ENCODE measurements at regions of chr4 and their contacts with region 1.

Region 1: GRCh38 chr4:6673660-6674499 is 19.8 kb upstream of the S100P start:
- DNase-seq: peak; percentile 96
- H3K4me3 Mint-ChIP-seq: peak overlapping the region; percentile 96
- H3K27ac Mint-ChIP-seq: peak overlapping the region; percentile 98
- H3K4me1 Mint-ChIP-seq: peaks cover 45% of the 10 kb centered on the region
- H3K27me3 Mint-ChIP-seq: no peaks in the 10 kb centered on the region

Region 2: GRCh38 chr4:6595897-6596537 is 77.9 kb before region 1 on chr4:
- CTCF ChIA-PET with region 1: no interaction called
- intact Hi-C with region 1: no loop called
- DNase-seq: no peak
- H3K4me3 Mint-ChIP-seq: no peak overlapping the region
- H3K27ac Mint-ChIP-seq: no peak overlapping the region
- H3K4me1 Mint-ChIP-seq: no peaks in the 10 kb centered on the region
- H3K27me3 Mint-ChIP-seq: no peaks in the 10 kb centered on the region

Region 3: DNA sequence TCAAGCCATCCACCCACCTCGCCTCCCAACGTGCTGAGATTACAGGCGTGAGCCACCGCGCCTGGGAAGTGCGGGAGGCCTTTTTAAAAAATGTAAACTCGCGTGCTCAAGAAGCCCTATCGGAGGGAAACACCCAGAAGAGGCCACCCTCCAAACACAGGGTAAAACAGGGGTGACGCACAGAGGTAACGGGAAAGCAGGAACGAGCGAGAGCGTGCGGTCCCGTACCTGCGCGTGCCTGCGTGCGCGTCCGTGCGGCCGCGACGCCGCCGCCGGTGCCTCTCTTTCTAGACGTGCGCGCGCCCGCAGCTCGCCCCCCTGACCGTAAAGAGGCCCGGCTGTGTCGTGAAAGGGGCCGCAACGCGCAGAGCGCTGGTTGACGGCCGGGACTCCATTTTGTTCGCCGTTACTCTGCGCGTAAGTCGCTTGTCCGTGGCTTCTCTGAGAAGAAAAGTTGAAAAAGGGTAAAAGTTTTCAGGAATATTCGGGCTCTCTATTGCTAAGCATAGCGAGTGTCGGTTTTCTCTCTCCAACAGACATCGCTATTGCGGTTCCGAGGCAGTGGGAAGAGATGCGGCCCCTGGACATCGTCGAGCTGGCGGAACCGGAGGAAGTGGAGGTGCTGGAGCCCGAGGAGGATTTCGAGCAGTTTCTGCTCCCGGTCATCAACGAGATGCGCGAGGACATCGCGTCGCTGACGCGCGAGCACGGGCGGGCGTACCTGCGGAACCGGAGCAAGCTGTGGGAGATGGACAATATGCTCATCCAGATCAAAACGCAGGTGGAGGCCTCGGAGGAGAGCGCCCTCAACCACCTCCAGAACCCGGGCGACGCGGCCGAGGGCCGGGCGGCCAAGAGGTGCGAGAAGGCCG is 33.4 kb before region 1 on chr4 and contains the start of gene MRFAP1:
- CTCF ChIA-PET with region 1: interaction called, 5 read pairs
- intact Hi-C with region 1: loop called (anchors 1 kb)
- DNase-seq: peak; percentile 96
- H3K4me3 Mint-ChIP-seq: peak within 1 kb of the TSS; percentile 98
- H3K27ac Mint-ChIP-seq: peak within 1 kb of the TSS; percentile 99
- H3K4me1 Mint-ChIP-seq: peaks cover 28% of the 10 kb centered on the region
- H3K27me3 Mint-ChIP-seq: no peaks in the 10 kb centered on the region
- total RNA-seq, gene MRFAP1: 150 to 151 TPM

Region 4: GRCh38 chr4:6688879-6689505 is 15.1 kb after region 1 on chr4:
- CTCF ChIA-PET with region 1: interaction called, 33 read pairs
- intact Hi-C with region 1: loop called (anchors 1 kb)
- DNase-seq: peak; percentile 89
- H3K4me3 Mint-ChIP-seq: peak overlapping the region; percentile 51
- H3K27ac Mint-ChIP-seq: no peak overlapping the region
- H3K4me1 Mint-ChIP-seq: peaks cover 61% of the 10 kb centered on the region
- H3K27me3 Mint-ChIP-seq: no peaks in the 10 kb centered on the region

Region 5: DNA sequence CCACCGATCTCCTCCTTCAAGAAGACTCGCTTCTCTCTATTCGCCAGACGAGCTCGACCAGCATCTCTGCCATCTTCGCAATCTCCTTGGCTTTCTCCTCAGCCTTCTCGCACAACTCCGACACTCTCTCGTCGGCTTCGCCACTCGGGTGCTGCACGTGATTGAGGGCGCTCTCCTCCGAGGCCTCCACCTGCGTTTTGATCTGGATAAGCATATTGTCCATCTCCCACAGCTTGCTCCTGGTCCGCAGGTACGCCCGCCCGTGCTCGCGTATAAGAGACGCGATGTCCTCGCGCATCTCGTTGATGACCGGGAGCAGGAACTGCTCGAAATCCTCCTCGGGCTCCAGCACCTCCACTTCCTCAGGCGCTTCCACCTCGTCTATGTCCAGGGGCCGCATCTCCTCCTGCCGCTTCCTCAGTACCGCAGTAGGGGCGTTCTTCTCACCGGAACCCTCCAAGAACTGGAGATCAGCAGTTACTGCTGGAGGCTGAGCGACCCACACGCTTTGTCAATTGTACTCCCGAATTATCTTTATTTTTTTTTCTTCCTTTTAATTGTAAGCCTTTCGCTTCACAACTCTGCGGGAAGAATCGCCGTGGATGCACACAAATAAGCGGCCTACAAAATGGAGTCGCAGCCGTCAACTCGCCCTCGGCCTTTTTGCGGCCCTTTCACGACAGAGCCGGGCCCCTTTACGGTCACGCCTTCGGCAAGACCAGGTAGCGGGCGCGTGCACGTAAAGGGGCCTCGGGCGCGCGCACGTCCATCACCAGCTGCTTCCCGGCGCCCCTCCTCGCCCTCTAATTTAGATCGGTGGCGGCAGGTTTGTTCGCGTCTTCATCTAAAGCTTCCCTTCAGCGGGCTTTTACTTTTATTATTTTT is 35.6 kb after region 1 on chr4 and contains the start of gene MRFAP1L1:
- CTCF ChIA-PET with region 1: interaction called, 96 read pairs
- intact Hi-C with region 1: loop called (anchors 1 kb)
- DNase-seq: peak; percentile 98
- H3K4me3 Mint-ChIP-seq: peak within 1 kb of the TSS; percentile 98
- H3K27ac Mint-ChIP-seq: peak within 1 kb of the TSS; percentile 98
- H3K4me1 Mint-ChIP-seq: peaks cover 49% of the 10 kb centered on the region
- H3K27me3 Mint-ChIP-seq: no peaks in the 10 kb centered on the region
- total RNA-seq, gene MRFAP1L1: 37.0 to 38.6 TPM

Region 6: DNA sequence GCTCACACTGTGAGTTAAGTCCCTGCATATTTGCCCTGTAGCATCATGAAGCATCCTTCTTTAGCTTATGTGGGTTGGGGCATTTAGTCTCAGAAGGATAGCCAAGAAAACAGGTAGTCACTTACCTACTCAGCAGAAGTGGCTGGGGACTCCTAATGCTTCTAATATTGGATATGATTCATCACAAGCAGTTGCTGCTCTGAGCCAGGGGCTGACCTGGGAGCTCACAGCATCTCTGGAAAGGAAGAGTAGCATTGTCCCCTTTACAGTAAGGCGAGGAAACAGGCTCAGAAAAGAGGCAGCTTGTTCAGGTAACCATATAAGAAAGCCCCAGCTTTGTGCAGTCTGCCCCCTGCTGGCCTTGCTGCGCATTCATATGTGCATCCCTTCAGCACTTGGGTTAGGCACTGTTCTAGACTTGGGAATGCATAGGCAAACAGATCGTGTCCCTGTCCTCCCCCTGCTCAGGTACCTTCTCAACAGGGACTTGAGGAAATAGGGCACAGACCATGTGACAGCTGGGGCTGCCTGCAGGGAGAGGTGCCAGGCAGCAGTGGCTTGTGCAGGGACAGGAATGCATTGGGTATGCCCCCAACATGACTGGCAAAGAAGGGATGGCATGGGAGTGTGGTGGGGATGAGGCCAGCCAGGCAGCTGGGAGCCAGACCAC is 200.0 kb after region 1 on chr4:
- CTCF ChIA-PET with region 1: interaction called, 14 read pairs
- intact Hi-C with region 1: loop called (anchors 1 kb)
- DNase-seq: peak; percentile 91
- H3K4me3 Mint-ChIP-seq: no peak overlapping the region
- H3K27ac Mint-ChIP-seq: no peak overlapping the region
- H3K4me1 Mint-ChIP-seq: peaks cover 2% of the 10 kb centered on the region
- H3K27me3 Mint-ChIP-seq: no peaks in the 10 kb centered on the region

Region 7: DNA sequence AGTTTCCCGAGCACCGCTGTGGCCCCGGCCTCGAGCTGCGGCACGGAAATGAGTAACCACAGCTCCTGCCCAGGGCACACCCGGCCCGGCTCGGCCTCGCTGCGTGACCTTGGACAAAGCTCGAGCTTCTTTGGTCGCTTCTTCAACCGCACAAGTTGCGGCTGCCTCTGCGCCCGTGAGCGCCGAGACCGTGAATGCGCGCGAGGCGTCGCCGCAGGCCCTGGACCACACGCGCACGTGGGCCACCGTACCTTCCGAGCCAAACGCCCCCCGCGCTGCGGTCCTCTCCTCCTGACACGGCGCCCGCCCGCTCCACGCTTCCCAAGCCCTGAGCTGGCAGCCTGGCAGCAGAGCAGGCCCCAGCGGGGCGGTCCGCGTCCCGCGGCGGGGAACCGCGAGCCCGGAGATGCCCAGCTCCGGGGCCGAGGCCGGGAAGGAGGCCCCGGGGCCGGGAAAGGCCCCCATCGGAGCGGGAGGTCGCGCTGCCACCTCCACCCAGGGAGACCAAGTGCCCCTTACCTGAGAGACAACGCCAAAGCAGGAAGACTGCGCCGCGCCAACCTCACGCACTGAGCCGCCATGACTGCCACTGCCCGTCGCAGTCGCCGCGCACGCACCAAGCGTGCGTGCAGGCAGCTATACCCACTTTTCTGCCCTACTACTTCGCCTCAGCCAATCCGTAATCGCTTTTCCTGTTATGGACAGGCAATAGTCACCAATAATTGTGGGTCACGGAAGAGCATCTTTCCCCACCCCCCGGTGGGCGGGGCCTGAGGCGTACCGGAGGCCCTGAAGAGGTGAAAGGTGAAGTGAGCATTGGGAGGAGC is 393.8 kb after region 1 on chr4 and contains the start of gene GRPEL1:
- CTCF ChIA-PET with region 1: no interaction called
- intact Hi-C with region 1: loop called (anchors 1 kb)
- DNase-seq: peak; percentile 100
- H3K4me3 Mint-ChIP-seq: peak within 1 kb of the TSS; percentile 96
- H3K27ac Mint-ChIP-seq: peak within 1 kb of the TSS; percentile 89
- H3K4me1 Mint-ChIP-seq: peaks cover 39% of the 10 kb centered on the region
- H3K27me3 Mint-ChIP-seq: no peaks in the 10 kb centered on the region
- total RNA-seq, gene GRPEL1: 53.7 to 53.9 TPM